Cardiac septum (tissue), 1 donor: ENCODE measurements at regions of chr7 and their contacts with region 1.

Region 1: GRCh38 chr7:151368136-151368571 is 26.5 kb downstream of the NUB1 start:
- DNase-seq: peak; percentile 90

Region 2: DNA sequence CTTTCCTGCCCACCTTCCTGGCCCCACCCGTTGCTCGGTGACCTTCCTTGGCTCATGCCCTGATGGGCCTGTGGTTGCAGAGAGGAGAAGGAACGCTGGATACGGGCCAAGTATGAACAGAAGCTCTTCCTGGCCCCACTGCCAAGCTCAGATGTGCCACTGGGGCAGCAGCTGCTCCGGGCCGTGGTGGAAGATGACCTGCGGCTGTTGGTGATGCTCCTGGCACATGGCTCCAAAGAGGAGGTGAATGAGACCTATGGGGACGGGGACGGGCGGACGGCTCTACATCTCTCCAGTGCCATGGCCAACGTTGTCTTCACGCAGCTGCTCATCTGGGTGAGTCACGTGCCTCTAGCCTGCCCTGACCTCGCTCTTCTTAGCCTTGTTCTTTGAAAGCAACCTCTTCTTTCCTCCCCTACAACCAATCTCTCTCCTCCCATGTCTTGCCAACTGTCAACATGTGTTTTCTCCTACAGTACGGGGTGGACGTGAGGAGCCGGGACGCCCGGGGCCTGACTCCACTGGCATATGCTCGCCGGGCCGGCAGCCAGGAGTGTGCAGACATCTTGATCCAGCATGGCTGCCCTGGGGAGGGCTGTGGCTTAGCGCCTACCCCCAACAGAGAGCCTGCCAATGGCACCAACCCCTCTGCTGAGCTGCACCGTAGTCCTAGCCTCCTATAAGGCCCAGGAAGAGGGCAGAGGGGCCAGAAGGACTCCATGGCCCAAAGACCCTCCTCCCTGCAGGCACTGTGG is 224.7 kb before region 1 on chr7:
- intact Hi-C with region 1: no loop called
- DNase-seq: peak; percentile 73

Region 3: GRCh38 chr7:151244196-151244840 is 123.8 kb before region 1 on chr7:
- intact Hi-C with region 1: no loop called
- DNase-seq: no peak

Region 4: DNA sequence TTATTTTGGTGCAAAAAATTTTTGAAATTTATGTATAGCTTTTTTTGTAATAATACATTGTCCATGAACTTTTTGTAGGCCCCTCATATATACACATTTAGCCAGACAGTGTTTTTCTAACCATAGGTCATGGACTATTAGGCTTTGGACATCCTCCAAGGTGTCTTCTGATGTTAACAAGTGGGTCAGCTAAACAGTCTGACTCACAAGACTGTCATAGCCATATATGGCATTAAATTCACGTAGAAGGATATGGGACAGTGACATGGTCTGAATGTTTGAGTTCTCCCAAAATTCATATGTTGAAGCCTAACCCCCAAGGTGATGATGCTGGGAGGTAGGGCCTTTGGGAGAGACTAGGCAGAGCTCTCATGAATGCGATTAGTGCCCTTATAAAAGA is 40.5 kb before region 1 on chr7:
- intact Hi-C with region 1: no loop called
- DNase-seq: no peak

Region 5: DNA sequence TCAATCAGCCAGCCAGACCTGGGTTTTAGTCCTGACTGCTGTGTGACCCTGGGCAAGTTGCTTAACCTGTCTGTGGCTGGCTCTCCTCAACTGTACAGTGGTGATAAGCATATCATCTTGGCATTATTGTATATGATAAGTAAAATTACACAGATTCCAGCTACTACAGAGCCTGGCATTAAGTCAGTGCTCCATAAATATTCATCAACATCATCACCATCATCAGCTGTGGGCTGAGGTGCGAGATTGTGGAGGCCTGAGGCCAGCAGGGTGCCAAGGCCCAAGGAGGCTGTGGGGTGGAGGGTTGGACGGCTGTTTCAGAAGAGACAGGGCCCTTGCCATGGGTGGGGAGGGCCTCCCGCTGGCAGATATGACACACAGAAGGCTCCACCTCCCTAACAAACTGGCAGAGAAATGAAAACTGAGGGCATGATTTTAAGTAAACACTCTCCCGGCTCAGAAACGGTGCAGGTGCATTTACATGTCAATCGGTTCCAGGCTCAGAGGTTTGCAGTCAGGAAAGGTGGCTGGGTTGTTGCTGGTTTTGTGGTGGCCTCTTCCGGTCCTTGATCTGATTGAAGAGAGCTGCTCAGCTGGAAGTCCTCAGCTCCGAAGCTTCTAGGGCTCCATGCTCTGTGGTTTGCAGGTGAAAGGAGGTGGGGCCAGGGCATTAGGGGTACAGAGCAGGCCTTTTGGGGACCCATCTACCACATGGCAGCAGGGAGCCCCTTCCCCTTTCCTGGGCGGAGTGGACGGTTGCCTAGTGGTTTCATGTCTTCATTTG is 61.6 kb after region 1 on chr7:
- intact Hi-C with region 1: no loop called
- DNase-seq: no peak

Region 6: GRCh38 chr7:151448261-151449252 is 80.4 kb after region 1 on chr7:
- intact Hi-C with region 1: loop called (anchors 1 kb)
- DNase-seq: peak; percentile 86

Region 7: GRCh38 chr7:151626422-151627115 is 258.4 kb after region 1 on chr7:
- intact Hi-C with region 1: loop called (anchors 10 kb)
- DNase-seq: no peak

Region 8: DNA sequence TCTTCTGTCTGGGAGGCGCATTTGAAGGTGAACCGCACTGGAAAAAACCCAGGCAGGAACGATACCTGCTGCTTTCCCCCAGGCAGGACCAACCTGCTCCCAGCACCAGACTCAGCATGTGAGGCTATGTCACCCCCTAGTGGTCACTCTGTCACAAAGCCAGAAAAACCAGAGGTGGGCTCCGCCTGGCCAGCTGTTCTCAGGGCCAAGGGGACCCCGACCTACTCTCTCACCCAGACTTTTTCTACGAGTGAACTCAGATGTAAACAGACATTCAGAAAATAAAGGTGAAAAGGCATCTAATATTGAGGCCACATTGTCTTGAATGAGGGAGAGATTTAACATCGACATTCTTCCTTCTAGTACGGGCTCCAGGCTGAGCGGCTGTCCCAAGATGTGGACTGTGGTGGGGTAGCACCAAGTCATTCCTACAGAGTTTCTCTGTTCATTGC is 391.5 kb after region 1 on chr7:
- intact Hi-C with region 1: loop called (anchors 2 kb)
- DNase-seq: peak; percentile 84